Vagina (tissue), 2 donors: ENCODE measurements at regions of chr1 and their contacts with region 1.

Region 1: GRCh38 chr1:180533266-180533987 is 25.3 kb upstream of the OVAAL start:
- DNase-seq: no peak
- H3K4me3 ChIP-seq: no peak overlapping the region
- H3K27ac ChIP-seq: no peak overlapping the region
- H3K4me1 ChIP-seq: no peaks in the 10 kb centered on the region
- H3K27me3 ChIP-seq: no peaks in the 10 kb centered on the region
- CTCF ChIP-seq: peak; percentile 31 to 60 (median 48)
- POLR2A ChIP-seq: no peak

Region 2: GRCh38 chr1:180382317-180383115 is 150.9 kb before region 1 on chr1:
- intact Hi-C with region 1: no loop called
- DNase-seq: no peak
- H3K4me3 ChIP-seq: no peak overlapping the region
- H3K27ac ChIP-seq: no peak overlapping the region
- H3K4me1 ChIP-seq: no peaks in the 10 kb centered on the region
- H3K27me3 ChIP-seq: no peaks in the 10 kb centered on the region
- CTCF ChIP-seq: no peak
- POLR2A ChIP-seq: no peak

Region 3: DNA sequence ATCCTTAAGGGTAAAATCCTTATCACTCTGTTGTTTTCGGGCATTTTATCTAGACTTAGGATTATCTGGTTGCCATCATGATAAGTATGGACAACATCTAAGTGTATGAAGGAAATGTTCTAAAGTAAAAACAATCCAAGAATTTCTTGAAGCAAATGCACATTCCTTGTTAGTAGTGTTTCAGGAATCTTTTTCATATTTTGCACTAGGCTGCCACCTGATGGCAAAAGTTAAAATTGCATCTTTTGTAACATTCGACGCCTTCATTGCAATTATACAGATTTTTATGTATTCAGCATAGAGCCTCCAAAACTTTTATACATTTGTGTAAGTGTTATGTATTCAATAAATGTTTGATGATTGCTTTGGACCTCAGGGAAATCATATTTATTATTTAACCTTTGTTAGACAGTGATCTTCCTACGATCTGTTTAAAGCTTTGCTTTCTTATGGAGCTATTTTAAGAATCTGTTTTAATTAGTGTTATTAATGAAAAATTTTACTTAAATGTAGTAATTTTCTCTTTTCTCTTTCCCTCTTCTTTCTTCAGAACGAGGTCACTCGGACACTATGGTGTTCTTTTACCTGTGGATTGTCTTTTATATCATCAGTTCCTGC is 329.8 kb after region 1 on chr1:
- intact Hi-C with region 1: loop called (anchors 10 kb)
- DNase-seq: no peak
- H3K4me3 ChIP-seq: no peak overlapping the region
- H3K27ac ChIP-seq: no peak overlapping the region
- H3K4me1 ChIP-seq: no peaks in the 10 kb centered on the region
- H3K27me3 ChIP-seq: no peaks in the 10 kb centered on the region
- CTCF ChIP-seq: peak; percentile 59 to 66 (median 60)
- POLR2A ChIP-seq: no peak